ENCODE measurements at regions of chr2 and their contacts with region 1.

Region 1: DNA sequence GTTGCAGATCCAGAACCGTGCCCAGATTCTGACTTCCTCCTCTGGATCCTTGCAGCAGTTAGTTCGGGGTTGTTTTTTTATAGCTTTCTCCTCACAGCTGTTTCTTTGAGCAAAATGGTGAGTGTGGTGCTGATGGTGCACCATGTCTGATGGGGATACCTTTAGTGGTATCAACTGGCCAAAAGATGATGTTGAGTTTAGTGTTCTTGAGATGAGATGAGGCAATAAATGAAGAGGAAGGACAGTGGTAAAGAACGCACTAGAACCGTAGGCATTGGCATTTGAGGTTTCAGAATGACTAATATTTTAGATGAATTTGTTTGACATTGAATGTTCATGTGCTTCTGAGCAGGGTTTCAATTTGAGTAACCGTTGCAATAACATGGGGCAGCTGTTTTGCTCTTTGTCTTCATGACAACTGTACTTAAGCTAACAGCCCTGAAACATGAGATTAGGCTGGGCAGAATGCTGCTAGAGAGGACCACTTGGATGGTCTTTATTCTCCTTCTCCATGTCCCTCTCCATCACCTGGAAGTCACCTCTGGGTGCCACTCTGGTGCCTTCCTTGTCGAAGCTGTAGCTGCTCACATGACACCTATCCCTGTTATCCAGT is 3.9 kb downstream of the CTLA4 start:
- DNase-seq: peak; percentile 60
- ATAC-seq: peak; percentile 47
- H3K4me3 Mint-ChIP-seq: peak overlapping the region; percentile 93
- H3K27ac Mint-ChIP-seq: peak overlapping the region; percentile 100
- H3K4me1 Mint-ChIP-seq: peaks cover 73% of the 10 kb centered on the region
- H3K27me3 Mint-ChIP-seq: no peaks in the 10 kb centered on the region

Region 2: DNA sequence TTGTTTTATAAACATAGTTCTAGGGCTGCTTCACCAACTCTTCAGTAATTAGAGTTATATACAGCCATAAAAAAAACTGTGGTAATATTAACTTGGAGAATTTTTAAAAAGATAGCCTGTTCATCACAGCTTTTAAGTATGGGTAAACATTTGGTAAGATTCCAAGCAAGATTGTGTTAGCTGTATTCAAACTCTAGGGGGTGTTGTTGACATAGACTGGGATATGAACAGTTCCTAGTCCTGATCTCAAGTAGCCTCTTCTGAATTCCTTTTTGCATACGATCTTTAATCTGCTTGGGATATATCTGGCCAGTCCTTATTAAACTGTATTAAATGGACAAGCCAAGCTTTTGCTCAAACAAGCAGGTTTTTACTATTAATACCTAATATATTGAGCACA is 1592.5 kb before region 1 on chr2:
- CTCF ChIA-PET with region 1: no interaction called
- POLR2A ChIA-PET with region 1: no interaction called
- intact Hi-C with region 1: loop called in 1 of 2 experiments (anchors 10 kb)
- DNase-seq: no peak
- ATAC-seq: no peak
- H3K4me3 Mint-ChIP-seq: no peak overlapping the region
- H3K27ac Mint-ChIP-seq: peak overlapping the region; percentile 84
- H3K4me1 Mint-ChIP-seq: peaks cover 46% of the 10 kb centered on the region
- H3K27me3 Mint-ChIP-seq: no peaks in the 10 kb centered on the region

Region 3: DNA sequence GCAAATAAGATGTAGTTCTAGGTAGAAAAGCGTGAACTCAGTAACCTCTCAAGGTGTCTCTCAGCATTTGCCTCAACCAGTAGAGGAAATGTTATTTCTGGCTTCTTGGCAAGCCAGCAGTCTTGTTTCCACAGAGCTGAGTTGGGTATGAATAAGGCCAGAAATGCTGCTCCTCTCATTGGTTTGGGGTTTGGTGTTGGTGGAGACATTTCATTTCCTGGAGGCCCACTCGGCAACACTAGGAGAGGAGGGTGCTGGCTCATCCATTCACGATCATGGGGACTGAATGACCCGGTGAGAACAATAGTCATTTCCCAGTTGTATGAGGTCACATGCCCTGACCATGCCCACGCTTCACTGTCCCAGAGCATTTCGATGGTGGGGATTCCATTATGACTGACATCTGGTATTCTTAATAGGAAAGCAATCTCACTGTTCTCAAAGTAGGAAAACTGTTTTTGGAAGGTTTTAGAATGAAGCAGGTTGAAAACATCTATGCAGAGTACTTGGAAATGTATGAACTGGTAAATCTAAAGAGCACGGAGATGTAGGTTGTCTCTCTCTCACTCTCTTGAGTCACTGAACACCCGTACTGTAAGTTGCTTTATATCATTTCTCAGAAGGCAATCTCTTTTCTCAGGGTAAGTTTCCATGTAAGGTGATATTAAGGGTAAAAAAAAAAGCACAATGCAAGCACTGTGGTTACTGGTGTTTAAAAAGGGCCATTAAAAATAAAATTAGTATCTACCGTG is 41.0 kb before region 1 on chr2:
- CTCF ChIA-PET with region 1: no interaction called
- POLR2A ChIA-PET with region 1: interaction called, 7 read pairs
- intact Hi-C with region 1: loop called (anchors 1 kb)
- DNase-seq: peak; percentile 83
- ATAC-seq: peak; percentile 95
- H3K4me3 Mint-ChIP-seq: peak overlapping the region; percentile 42
- H3K27ac Mint-ChIP-seq: peak overlapping the region; percentile 95
- H3K4me1 Mint-ChIP-seq: peaks cover 19% of the 10 kb centered on the region
- H3K27me3 Mint-ChIP-seq: no peaks in the 10 kb centered on the region

Region 4: GRCh38 chr2:203887677-203888076 is 16.2 kb after region 1 on chr2:
- CTCF ChIA-PET with region 1: interaction called, 40 read pairs
- POLR2A ChIA-PET with region 1: interaction called, 81 read pairs
- intact Hi-C with region 1: loop called (anchors 1 kb)
- DNase-seq: no peak
- ATAC-seq: no peak
- H3K4me3 Mint-ChIP-seq: no peak overlapping the region
- H3K27ac Mint-ChIP-seq: peak overlapping the region; percentile 68
- H3K4me1 Mint-ChIP-seq: peaks cover 67% of the 10 kb centered on the region
- H3K27me3 Mint-ChIP-seq: peaks cover 4% of the 10 kb centered on the region

Region 5: GRCh38 chr2:203934041-203934492 is 62.6 kb after region 1 on chr2:
- CTCF ChIA-PET with region 1: interaction called, 6 read pairs
- POLR2A ChIA-PET with region 1: interaction called, 27 read pairs
- intact Hi-C with region 1: loop called (anchors 1 to 2 kb)
- DNase-seq: peak; percentile 78
- ATAC-seq: peak; percentile 47
- H3K4me3 Mint-ChIP-seq: peak overlapping the region; percentile 69
- H3K27ac Mint-ChIP-seq: peak overlapping the region; percentile 96
- H3K4me1 Mint-ChIP-seq: peaks cover 61% of the 10 kb centered on the region
- H3K27me3 Mint-ChIP-seq: no peaks in the 10 kb centered on the region

Region 6: DNA sequence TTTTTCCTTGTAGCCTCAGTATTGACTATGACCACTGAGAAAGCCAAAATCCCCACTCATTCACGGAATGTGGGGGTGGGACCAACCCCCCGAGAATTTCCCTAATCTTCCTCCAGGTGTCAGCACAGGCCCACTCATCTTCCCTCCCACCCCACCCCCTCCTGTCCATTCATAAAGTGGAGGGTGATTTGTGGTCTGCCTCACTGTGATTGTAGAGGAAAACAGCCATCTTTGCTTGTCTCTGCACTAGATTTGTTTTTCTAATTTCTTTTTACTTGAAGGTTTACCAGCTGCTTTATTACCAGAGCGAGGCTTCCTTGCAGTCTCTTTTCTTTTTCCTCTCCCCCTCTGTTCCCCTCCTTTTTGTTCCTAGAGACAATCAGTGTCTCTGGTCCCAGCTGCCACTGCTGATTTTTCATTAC is 236.9 kb after region 1 on chr2:
- CTCF ChIA-PET with region 1: interaction called, 3 read pairs
- POLR2A ChIA-PET with region 1: interaction called, 3 read pairs
- intact Hi-C with region 1: loop called in 1 of 2 experiments (anchors 5 kb)
- DNase-seq: peak; percentile 74
- ATAC-seq: peak; percentile 30
- H3K4me3 Mint-ChIP-seq: peak overlapping the region; percentile 58
- H3K27ac Mint-ChIP-seq: peak overlapping the region; percentile 92
- H3K4me1 Mint-ChIP-seq: peaks cover 75% of the 10 kb centered on the region
- H3K27me3 Mint-ChIP-seq: peaks cover 2% of the 10 kb centered on the region

Measured in activated CD4-positive, alpha-beta T cell treated with anti-CD3 and anti-CD28 coated beads for 36 hours (primary cell).